ENCODE measurements at regions of chr10 and their contacts with region 1.

Region 1: DNA sequence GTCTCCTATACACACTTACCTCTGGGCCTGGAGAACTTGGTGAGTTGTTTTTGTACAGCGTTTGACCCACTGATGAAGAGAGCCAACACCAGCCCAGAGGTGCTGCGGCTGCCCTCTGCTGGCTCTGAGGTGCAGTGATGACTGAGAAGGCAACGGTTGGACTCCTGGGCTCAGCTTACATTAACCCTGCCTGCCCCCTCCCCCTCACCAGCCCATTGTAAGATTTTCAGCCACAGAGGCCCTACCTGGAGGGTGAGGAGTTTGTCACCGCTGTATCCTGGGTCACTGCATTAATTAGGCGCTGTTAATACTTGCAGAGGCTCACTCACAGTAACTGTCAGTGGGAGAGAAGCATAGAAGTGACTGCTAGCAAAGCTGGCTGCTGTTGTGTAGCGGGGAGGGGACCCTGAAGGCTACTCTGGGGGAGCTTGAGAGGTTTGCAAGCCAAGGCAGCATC is 19.0 kb upstream of the ANKRD2 start:
- DNase-seq: peak in 1 of 2 donors; percentile 80
- H3K4me3 ChIP-seq: no peak overlapping the region
- H3K27ac ChIP-seq: no peak overlapping the region
- H3K4me1 ChIP-seq: peaks cover 0 to 8% of the 10 kb centered on the region in 2 donors
- H3K27me3 ChIP-seq: no peaks in the 10 kb centered on the region
- CTCF ChIP-seq: peak; percentile 76 to 86 (median 83)

Region 2: DNA sequence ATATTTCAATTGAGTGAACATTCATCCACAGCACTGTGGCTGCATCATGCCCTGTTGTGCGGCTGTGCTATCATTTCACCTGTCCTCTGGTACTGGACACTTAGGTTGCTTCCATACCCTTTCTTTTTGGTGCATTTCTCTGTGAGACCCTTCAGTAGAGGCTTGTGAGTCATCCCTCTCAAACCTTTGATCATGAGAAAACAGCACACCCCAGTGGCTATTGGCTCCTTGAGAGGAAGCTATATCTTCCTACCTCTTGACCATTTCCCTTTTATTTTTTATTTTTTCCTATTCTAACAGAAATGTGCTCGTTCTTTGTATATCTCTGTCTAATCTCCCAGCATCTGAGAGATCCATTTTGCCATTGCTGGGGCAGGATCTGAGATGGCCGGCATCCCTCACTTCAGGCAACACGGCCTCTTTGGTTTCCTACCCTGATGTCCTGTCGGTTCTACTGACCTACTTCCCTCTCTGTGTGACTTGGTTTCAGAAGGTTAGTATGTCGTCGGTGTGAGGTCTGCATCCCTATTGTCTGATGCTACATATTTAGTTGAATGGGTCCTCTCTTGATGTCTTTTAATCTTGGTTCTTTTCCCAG is 809.5 kb before region 1 on chr10:
- intact Hi-C with region 1: no loop called
- DNase-seq: no peak
- H3K4me3 ChIP-seq: no peak overlapping the region
- H3K27ac ChIP-seq: no peak overlapping the region
- H3K4me1 ChIP-seq: no peaks in the 10 kb centered on the region
- H3K27me3 ChIP-seq: no peaks in the 10 kb centered on the region
- CTCF ChIP-seq: no peak

Region 3: DNA sequence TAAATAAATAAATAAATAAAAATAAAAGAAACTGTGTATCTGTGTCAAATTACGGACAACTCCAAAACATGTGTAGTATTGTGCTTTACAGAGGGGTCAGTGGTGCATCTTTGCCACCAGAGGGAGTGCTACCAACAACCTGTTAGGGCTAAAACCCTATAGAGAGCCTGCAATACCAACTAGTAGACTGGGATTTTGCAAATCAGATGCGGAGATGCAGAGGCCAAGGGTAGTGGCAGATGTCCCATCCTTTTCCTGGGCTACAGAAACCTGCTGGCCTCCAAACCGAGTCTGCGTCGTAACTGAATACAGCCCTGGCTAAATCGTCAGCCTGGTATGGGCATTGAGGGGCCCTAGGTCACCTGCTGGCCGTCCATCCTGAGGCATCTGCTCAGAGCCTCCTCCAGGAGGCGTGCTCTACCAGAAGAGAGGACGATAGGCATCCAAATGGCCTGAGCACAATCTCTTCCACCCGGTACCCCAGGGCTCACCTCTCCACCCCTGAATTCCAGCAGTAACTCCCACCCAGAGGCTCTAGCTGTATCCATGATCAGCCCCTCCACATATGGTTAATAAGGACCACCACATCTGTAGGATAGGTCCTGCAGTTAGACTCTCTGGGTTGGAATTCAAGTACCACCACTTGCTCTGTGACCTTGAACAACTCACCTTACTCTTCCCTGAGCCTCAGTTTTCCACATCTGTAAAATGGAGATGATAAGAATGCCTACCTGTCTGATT is 146.2 kb before region 1 on chr10:
- intact Hi-C with region 1: loop called (anchors 2 kb)
- DNase-seq: peak in 1 of 2 donors; percentile 71
- H3K4me3 ChIP-seq: peak overlapping the region in 1 of 2 donors; percentile 23
- H3K27ac ChIP-seq: no peak overlapping the region
- H3K4me1 ChIP-seq: peaks cover 0 to 3% of the 10 kb centered on the region in 2 donors
- H3K27me3 ChIP-seq: no peaks in the 10 kb centered on the region
- CTCF ChIP-seq: peak; percentile 60 to 77 (median 76)

Region 4: GRCh38 chr10:97463363-97464132 is 90.1 kb before region 1 on chr10:
- intact Hi-C with region 1: loop called (anchors 1 kb)
- DNase-seq: no peak
- H3K4me3 ChIP-seq: no peak overlapping the region
- H3K27ac ChIP-seq: peak overlapping the region; percentile 34 to 49
- H3K4me1 ChIP-seq: no peaks in the 10 kb centered on the region
- H3K27me3 ChIP-seq: no peaks in the 10 kb centered on the region
- CTCF ChIP-seq: peak; percentile 74 to 85 (median 78)

Region 5: GRCh38 chr10:97531486-97531885 is 22.1 kb before region 1 on chr10:
- intact Hi-C with region 1: no loop called
- DNase-seq: no peak
- H3K4me3 ChIP-seq: no peak overlapping the region
- H3K27ac ChIP-seq: no peak overlapping the region
- H3K4me1 ChIP-seq: no peaks in the 10 kb centered on the region
- H3K27me3 ChIP-seq: no peaks in the 10 kb centered on the region
- CTCF ChIP-seq: no peak

Region 6: GRCh38 chr10:97596101-97597062 is 42.8 kb after region 1 on chr10:
- intact Hi-C with region 1: no loop called
- DNase-seq: peak; percentile 56 to 95
- H3K4me3 ChIP-seq: no peak overlapping the region
- H3K27ac ChIP-seq: peak overlapping the region; percentile 88 to 99
- H3K4me1 ChIP-seq: peaks cover 9 to 49% of the 10 kb centered on the region in 2 donors
- H3K27me3 ChIP-seq: no peaks in the 10 kb centered on the region
- CTCF ChIP-seq: no peak

Measured in ascending aorta (tissue), 2 donors.